GM12878 (cell line): ENCODE measurements at regions of chr12 and their contacts with region 1.

Region 1: DNA sequence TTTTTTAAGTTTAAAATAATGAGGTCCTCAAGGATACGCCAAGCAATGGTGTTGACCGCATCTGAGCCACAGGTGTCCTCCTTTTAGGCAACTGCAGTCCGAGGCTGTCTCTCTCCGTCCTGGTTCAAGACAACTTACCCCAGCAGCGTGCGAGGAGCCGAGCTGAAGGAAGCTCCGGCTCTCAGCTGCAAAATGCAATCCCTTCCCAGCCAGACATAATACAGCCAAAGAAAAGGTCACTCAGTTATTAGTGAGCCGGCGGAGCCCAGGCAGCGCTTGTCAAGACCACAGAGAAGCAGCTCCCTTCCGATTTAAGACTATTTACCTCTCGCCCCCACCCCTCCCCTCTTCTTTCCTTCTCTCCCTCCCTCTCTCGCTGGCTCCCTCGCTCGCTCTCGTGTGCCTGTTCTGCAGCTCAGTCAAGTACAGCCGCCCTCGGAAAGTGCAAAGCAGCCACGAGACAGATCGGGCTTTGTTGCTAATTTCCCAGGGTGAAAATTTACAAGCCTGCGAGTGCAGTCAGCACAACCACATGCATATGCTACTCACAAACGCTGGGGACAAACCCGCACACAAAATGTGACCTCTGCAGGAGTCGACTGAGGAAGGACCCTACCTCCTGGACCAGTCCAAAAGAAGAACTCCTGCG is 363 bp upstream of the LMO3 start:
- DNase-seq: no peak
- ATAC-seq: peak; percentile 40
- H3K4me3 ChIP-seq: peak overlapping the region; percentile 34; the same call in 1 of the 2 replicates
- H3K27ac ChIP-seq: no peak overlapping the region
- H3K4me1 ChIP-seq: peaks cover 4% of the 10 kb centered on the region; the same call in 1 of the 2 replicates
- H3K27me3 ChIP-seq: peaks cover 0 to 2% of the 10 kb centered on the region in 2 experiments; a peak in 2 of 4 replicates
- CTCF ChIP-seq: no peak
- EP300 ChIP-seq: no peak
- POLR2A ChIP-seq: no peak
- RAD21 ChIP-seq: no peak

Region 2: DNA sequence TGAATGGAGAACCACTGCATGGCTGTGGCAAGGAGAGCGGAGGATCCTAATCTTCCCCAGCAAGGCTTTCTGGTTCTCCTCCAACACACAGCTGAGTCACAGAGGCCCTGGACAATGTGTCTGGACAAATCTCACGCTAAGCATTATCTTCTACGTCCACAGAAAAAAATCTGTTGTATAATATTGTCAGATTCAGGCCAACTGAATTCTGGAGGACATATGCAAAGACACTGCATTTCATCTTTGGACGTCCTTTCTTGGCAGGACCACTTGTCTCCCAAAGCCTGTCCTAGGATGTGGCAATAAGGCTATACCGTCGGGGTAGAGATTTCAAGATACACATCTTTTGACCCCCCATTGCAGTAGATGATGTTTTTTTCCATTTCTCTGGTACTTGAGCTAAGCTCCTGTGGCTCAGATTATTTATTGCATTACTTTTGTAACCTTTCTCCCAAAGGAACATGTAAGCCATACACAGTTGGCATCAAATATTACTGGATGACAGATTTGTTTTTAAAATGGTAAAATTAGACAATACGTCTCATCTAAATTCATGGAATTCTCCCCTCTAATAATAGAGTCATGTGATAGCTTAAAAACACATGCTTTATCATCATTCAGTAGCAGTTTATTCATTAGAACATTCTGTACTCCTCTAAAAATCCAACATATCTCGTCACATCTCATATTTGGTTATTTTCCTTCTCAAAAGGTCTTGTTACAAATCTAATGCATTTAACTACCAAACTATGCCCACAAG is 19.8 kb before region 1 on chr12:
- CTCF ChIA-PET with region 1: interaction called, 3 read pairs
- POLR2A ChIA-PET with region 1: no interaction called
- RAD21 ChIA-PET with region 1: interaction called, 5 read pairs
- SMC1A ChIA-PET with region 1: interaction called, 64 read pairs
- in situ Hi-C with region 1: no loop called
- intact Hi-C with region 1: no loop called
- DNase-seq: no peak
- ATAC-seq: no peak
- H3K4me3 ChIP-seq: no peak overlapping the region
- H3K27ac ChIP-seq: no peak overlapping the region
- H3K4me1 ChIP-seq: no peaks in the 10 kb centered on the region
- H3K27me3 ChIP-seq: no peaks in the 10 kb centered on the region
- CTCF ChIP-seq: no peak
- EP300 ChIP-seq: no peak
- POLR2A ChIP-seq: no peak
- RAD21 ChIP-seq: no peak

Region 3: DNA sequence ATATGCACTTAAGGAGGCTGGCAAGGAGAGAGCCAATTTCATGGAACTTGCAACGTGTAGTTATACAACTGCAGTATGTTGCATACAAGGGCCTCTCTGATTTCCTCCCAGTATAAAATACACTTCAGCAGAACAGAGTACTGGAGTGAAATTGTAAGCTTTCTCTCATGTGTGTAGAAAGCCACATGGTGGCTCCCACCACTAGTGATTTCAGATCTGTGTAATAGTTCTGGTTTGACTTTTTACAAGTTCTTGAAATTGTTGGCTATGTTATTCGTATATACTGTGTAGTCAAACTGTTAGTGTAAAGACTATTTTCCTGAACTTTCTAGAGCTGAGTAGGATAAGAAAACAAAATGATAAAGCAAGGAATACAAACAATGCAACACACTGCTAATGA is 16.0 kb after region 1 on chr12:
- CTCF ChIA-PET with region 1: interaction called, 7 read pairs
- POLR2A ChIA-PET with region 1: no interaction called
- RAD21 ChIA-PET with region 1: interaction called, 10 read pairs
- SMC1A ChIA-PET with region 1: interaction called, 8 read pairs
- in situ Hi-C with region 1: no loop called
- intact Hi-C with region 1: no loop called
- DNase-seq: no peak
- ATAC-seq: peak; percentile 79
- H3K4me3 ChIP-seq: no peak overlapping the region
- H3K27ac ChIP-seq: no peak overlapping the region
- H3K4me1 ChIP-seq: no peaks in the 10 kb centered on the region
- H3K27me3 ChIP-seq: no peaks in the 10 kb centered on the region
- CTCF ChIP-seq: peak; percentile 12 to 48 (median 12); a peak in 4 of 6 replicates
- EP300 ChIP-seq: no peak
- POLR2A ChIP-seq: no peak
- RAD21 ChIP-seq: peak; percentile 65

Region 4: GRCh38 chr12:16685107-16685506 is 78.8 kb after region 1 on chr12:
- CTCF ChIA-PET with region 1: interaction called, 4 read pairs
- POLR2A ChIA-PET with region 1: no interaction called
- RAD21 ChIA-PET with region 1: interaction called, 3 read pairs
- SMC1A ChIA-PET with region 1: no interaction called
- in situ Hi-C with region 1: no loop called
- intact Hi-C with region 1: loop called (anchors 5 kb)
- DNase-seq: no peak
- ATAC-seq: no peak; the same call in 2 of the 3 replicates
- H3K4me3 ChIP-seq: no peak overlapping the region
- H3K27ac ChIP-seq: no peak overlapping the region
- H3K4me1 ChIP-seq: no peaks in the 10 kb centered on the region
- H3K27me3 ChIP-seq: no peaks in the 10 kb centered on the region
- CTCF ChIP-seq: peak in 2 of 3 experiments; percentile 21 to 27; a peak in 2 of 6 replicates
- EP300 ChIP-seq: no peak
- POLR2A ChIP-seq: no peak
- RAD21 ChIP-seq: peak; percentile 58

Region 5: DNA sequence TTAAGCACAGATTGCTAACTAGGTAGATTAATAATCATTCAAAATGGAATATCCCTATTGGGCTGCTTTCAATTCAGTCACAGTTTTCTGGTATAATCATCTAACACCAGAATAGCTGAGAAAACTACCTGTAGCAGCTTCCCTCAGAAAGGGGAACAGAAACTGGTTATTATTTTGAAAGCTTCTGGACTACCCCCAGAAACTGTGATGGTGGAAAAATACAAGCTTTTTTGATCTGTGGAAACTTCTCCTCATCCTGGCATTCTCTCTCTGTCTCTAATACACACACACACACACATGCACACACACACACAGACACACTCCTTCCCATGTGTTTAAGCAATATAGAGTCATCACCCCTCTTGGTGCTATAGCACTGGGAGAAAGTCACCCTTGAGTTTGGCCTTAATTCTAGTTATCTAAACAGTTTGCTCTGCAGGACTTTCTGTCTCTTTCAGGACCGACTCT is 251.2 kb after region 1 on chr12:
- CTCF ChIA-PET with region 1: interaction called, 3 read pairs
- POLR2A ChIA-PET with region 1: interaction called, 3 read pairs
- RAD21 ChIA-PET with region 1: interaction called, 6 read pairs
- SMC1A ChIA-PET with region 1: interaction called, 17 read pairs
- in situ Hi-C with region 1: no loop called
- intact Hi-C with region 1: no loop called
- DNase-seq: peak; percentile 64
- ATAC-seq: peak; percentile 95
- H3K4me3 ChIP-seq: no peak overlapping the region
- H3K27ac ChIP-seq: no peak overlapping the region
- H3K4me1 ChIP-seq: peaks cover 3% of the 10 kb centered on the region; the same call in 1 of the 2 replicates
- H3K27me3 ChIP-seq: no peaks in the 10 kb centered on the region
- CTCF ChIP-seq: no peak
- EP300 ChIP-seq: peak; percentile 86 to 90
- POLR2A ChIP-seq: no peak
- RAD21 ChIP-seq: no peak

Region 6: DNA sequence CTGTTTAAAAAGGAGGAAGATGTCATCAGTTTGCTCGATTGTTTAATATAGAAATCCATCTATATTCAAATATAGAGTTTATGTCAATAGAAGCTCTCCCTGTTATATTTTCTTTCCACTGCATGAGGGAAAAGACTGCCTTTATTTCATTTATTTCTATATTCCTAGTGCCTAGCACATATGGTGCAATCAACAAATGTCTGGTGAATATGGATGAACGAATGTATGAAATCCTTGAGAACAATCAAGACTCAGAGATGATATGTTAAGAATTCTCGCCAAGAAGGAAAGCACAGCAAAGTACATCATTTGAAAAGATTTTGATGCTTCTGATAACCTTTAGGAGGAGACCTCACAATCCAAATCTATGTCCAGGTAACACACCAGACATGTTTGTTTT is 295.6 kb after region 1 on chr12:
- CTCF ChIA-PET with region 1: no interaction called
- POLR2A ChIA-PET with region 1: no interaction called
- RAD21 ChIA-PET with region 1: no interaction called
- SMC1A ChIA-PET with region 1: no interaction called
- in situ Hi-C with region 1: no loop called
- intact Hi-C with region 1: no loop called
- DNase-seq: no peak
- ATAC-seq: no peak
- H3K4me3 ChIP-seq: no peak overlapping the region
- H3K27ac ChIP-seq: no peak overlapping the region
- H3K4me1 ChIP-seq: no peaks in the 10 kb centered on the region
- H3K27me3 ChIP-seq: no peaks in the 10 kb centered on the region
- CTCF ChIP-seq: no peak
- EP300 ChIP-seq: no peak
- POLR2A ChIP-seq: no peak
- RAD21 ChIP-seq: no peak

Region 7: DNA sequence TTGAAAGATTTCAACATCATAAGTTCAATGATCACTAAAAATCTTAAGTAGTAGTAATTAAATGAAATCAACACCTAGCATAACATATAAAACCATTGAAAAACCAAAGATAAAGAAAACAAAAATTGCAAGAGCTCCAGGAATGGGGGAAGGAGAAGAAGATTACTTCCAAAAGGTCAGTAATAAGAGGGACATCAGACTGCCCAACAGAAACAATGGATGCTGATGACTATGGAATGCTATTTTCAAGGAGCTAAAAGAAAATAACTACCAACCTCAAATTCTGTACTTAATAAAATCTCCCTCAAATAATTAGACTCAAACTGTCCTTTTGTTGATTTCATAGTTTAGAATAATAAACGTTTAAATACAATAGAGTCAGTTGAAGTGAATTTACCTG is 314.1 kb after region 1 on chr12:
- CTCF ChIA-PET with region 1: no interaction called
- POLR2A ChIA-PET with region 1: no interaction called
- RAD21 ChIA-PET with region 1: no interaction called
- SMC1A ChIA-PET with region 1: no interaction called
- in situ Hi-C with region 1: no loop called
- intact Hi-C with region 1: no loop called
- DNase-seq: no peak
- ATAC-seq: no peak
- H3K4me3 ChIP-seq: no peak overlapping the region
- H3K27ac ChIP-seq: no peak overlapping the region
- H3K4me1 ChIP-seq: no peaks in the 10 kb centered on the region
- H3K27me3 ChIP-seq: no peaks in the 10 kb centered on the region
- CTCF ChIP-seq: no peak
- EP300 ChIP-seq: no peak
- POLR2A ChIP-seq: no peak
- RAD21 ChIP-seq: no peak